Cardiac septum (tissue), 1 donor: ENCODE measurements at regions of chr16 and their contacts with region 1.

Region 1: GRCh38 chr16:48164907-48165726 is 9.3 kb upstream of the ABCC12 start:
- DNase-seq: peak; percentile 87

Region 2: GRCh38 chr16:46954562-46954961 is 1210.6 kb before region 1 on chr16:
- intact Hi-C with region 1: loop called (anchors 10 kb)
- DNase-seq: no peak

Region 3: GRCh38 chr16:47141773-47142485 is 1023.2 kb before region 1 on chr16:
- intact Hi-C with region 1: no loop called
- DNase-seq: peak; percentile 91

Region 4: DNA sequence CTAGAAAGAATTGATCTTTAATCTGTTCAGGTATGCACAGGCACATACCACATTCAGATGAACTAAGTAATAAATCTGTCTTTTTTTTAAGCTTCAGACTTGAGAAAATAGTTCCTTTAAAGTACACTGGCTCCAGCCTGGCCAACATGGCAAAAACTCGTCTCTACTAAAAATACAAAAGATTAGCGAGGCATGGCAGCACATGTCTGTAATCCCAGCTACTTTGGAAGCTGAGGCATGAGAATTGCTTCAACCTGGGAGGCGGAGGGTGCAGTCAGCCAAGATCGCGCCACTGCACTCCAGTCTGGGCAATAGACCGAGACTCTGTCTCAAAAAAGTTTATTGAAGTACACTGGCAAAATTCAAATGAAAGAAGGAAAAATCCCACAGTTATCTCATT is 910.4 kb before region 1 on chr16:
- intact Hi-C with region 1: loop called (anchors 5 kb)
- DNase-seq: no peak

Region 5: DNA sequence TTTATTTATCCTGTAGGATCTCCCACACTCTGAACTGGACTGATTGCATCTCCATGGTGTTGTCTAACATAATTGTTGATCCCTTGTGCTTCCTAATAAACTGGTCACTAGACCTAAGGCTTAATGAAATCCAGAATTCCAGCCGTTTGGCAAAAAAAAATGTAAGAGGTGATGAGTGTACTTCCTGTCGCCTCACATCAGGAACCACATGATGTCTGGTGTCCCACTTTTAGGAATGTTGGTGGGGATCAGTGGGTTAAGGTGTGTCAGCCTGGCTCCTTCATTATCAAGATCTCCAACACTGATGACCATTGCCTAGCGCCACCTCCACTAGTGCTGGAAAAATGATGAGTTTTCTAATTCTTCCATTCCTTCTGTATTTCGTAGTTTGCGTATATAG is 60.3 kb after region 1 on chr16:
- intact Hi-C with region 1: no loop called
- DNase-seq: no peak